Right cardiac atrium (tissue), 5 donors: ENCODE measurements at regions of chr22 and their contacts with region 1.

Region 1: DNA sequence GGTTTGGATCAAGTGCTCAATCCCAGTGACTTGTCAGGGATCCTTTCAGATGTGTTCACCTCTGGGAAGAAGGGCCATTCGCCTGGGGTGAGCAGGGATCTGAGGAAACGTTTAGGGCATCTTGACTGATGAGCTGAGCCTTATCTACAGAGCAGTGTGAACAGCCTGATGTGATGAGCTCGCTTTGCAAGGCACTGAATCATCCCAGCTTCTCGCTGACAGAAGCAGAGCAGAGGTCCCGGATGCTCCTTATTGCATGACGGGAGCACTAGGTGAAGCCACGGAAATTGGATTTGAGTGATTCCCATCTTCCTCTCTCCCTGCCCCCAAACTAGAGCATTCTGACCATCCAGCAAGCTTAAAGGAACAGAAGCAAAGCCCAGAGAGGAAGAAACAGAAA is 46.5 kb downstream of the SEZ6L start:
- DNase-seq: no peak
- ATAC-seq: no peak
- H3K4me3 ChIP-seq: no peak overlapping the region
- H3K27ac ChIP-seq: no peak overlapping the region
- H3K4me1 ChIP-seq: no peaks in the 10 kb centered on the region
- H3K27me3 ChIP-seq: peaks cover 2% of the 10 kb centered on the region

Region 2: DNA sequence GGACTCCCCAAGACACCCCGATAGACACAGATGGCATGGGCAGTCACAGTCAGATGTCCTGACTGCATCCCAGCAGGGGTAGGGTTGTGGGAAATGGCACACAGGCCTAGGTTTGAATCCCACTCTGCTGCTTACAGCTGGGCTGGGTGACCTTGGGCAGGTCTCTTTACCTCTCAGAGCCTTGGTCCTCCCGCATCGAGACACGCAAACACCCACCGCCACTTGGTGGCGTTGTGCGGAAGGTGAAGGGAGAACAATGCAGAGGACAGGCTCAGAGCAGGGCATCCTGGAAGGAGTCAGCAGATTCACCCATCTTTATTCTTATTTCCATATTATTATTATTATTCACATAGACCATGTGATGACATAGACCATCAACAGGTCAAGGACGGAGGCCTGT is 582.2 kb after region 1 on chr22:
- intact Hi-C with region 1: loop called in 1 of 4 experiments (anchors 10 kb)
- DNase-seq: no peak
- ATAC-seq: no peak
- H3K4me3 ChIP-seq: no peak overlapping the region
- H3K27ac ChIP-seq: no peak overlapping the region
- H3K4me1 ChIP-seq: no peaks in the 10 kb centered on the region
- H3K27me3 ChIP-seq: no peaks in the 10 kb centered on the region